Activated CD8-positive, alpha-beta T cell treated with anti-CD3 and anti-CD28 coated beads for 36 hours (primary cell): ENCODE measurements at regions of chr9 and their contacts with region 1.

Region 1: GRCh38 chr9:126398403-126399058 is 71.9 kb downstream of the MVB12B start:
- DNase-seq: peak; percentile 80
- ATAC-seq: no peak
- H3K4me3 Mint-ChIP-seq: no peak overlapping the region
- H3K27ac Mint-ChIP-seq: peak overlapping the region; percentile 63
- H3K4me1 Mint-ChIP-seq: peaks cover 57% of the 10 kb centered on the region
- H3K27me3 Mint-ChIP-seq: no peaks in the 10 kb centered on the region
- CTCF ChIP-seq: peak; percentile 97

Region 2: DNA sequence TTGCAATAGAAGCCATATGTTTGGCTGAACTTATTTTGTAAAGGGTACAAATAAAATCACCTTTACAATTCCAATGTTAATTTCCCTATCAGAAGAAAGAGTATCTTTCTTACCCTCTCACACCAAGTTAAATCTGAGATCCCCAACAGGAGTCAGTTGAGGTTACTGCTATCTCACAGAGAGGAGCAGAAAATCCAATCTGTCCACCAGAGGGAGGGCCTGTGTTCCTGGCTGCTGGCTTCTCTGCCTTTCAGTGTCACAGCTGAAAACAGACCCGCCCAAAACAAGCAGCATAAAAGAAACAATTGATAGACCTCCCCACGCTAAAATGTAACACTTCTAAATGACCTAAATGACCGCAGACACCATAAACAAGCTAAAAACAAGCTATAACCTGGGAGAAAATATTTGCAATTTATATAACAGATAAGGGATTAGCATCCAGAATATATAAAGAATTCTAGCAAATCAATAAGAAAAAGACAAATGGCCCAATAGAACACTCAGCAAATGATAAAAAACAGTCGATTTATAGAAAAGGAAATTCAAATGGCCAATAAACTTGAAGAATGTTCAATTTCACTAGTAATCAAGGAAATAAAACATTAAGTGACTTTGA is 96.4 kb before region 1 on chr9:
- CTCF ChIA-PET with region 1: interaction called, 61 read pairs
- POLR2A ChIA-PET with region 1: interaction called, 3 read pairs
- intact Hi-C with region 1: no loop called
- DNase-seq: peak; percentile 71
- ATAC-seq: peak; percentile 67
- H3K4me3 Mint-ChIP-seq: no peak overlapping the region
- H3K27ac Mint-ChIP-seq: no peak overlapping the region
- H3K4me1 Mint-ChIP-seq: peaks cover 1% of the 10 kb centered on the region
- H3K27me3 Mint-ChIP-seq: peaks cover 1% of the 10 kb centered on the region
- CTCF ChIP-seq: peak; percentile 52

Region 3: DNA sequence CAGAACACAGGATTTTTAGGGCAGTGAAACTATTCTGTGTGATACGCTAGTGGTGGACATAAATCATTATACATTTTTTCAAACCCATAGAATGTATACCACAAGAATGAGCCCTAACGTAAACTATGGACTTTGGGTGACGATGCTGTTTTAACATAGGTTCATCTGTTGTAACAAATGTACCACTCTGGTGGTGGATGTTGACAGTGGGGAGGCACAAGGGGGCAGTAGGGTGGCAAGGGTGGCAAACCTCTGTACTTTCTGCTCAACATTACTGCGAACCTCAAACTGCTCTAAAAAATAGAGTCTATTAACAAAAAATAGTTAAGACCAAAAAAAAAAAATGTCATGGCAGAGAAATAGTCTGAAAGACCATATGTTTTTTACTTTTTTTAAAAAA is 81.0 kb before region 1 on chr9:
- CTCF ChIA-PET with region 1: interaction called, 104 read pairs
- POLR2A ChIA-PET with region 1: no interaction called
- intact Hi-C with region 1: no loop called
- DNase-seq: peak; percentile 55
- ATAC-seq: peak; percentile 69
- H3K4me3 Mint-ChIP-seq: no peak overlapping the region
- H3K27ac Mint-ChIP-seq: no peak overlapping the region
- H3K4me1 Mint-ChIP-seq: peaks cover 4% of the 10 kb centered on the region
- H3K27me3 Mint-ChIP-seq: no peaks in the 10 kb centered on the region
- CTCF ChIP-seq: peak; percentile 40

Region 4: GRCh38 chr9:126411225-126411947 is 12.9 kb after region 1 on chr9:
- CTCF ChIA-PET with region 1: interaction called, 13 read pairs
- POLR2A ChIA-PET with region 1: interaction called, 4 read pairs
- intact Hi-C with region 1: no loop called
- DNase-seq: peak; percentile 70
- ATAC-seq: peak; percentile 90
- H3K4me3 Mint-ChIP-seq: peak overlapping the region; percentile 61
- H3K27ac Mint-ChIP-seq: peak overlapping the region; percentile 86
- H3K4me1 Mint-ChIP-seq: peaks cover 41% of the 10 kb centered on the region
- H3K27me3 Mint-ChIP-seq: no peaks in the 10 kb centered on the region
- CTCF ChIP-seq: no peak

Region 5: DNA sequence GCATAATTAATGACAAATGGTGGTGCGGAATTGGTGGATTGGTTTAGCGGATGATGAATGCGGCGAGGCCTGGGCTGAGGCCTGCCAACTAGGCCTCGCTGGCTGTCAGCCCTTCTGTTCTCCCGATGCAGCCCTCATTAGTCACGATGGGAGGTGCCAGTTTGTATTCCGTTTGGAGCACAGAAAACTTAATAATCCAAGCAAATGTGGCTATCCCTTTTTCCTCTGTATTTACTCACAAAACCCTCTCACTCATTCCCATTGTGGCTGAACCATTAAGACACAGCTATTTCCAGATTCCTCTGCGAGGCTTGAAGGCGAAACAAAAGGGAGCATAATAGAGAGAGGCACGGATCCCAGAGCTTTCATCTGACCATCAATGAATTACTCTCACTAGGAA is 42.4 kb after region 1 on chr9:
- CTCF ChIA-PET with region 1: interaction called, 10 read pairs
- POLR2A ChIA-PET with region 1: no interaction called
- intact Hi-C with region 1: no loop called
- DNase-seq: no peak
- ATAC-seq: no peak
- H3K4me3 Mint-ChIP-seq: no peak overlapping the region
- H3K27ac Mint-ChIP-seq: no peak overlapping the region
- H3K4me1 Mint-ChIP-seq: peaks cover 25% of the 10 kb centered on the region
- H3K27me3 Mint-ChIP-seq: no peaks in the 10 kb centered on the region
- CTCF ChIP-seq: no peak

Region 6: DNA sequence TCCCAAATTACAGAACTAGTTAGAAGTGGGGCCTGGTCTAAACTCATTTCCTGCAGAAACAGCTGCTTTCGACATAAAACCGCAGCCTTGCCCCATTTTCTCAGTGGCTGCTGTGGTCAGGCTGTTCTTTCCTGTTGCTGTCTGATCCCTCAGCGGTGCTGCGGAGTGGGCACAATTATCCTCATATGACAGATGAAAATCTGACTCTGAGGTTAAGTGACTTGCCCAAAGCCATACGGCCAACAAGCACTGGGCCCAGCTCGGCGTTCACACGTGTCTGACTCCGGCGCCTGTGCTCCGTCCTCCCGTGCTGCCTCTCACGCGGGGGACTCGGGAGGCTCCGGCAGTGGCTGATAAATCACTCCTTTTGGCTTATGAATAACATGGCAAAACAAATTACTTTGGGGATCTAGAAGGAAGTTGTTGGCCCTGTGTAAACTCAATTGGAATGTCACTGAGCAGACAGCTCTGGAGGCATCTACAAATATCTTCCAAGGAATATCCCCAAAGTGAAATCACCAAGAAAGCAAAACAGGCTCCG is 72.6 kb after region 1 on chr9:
- CTCF ChIA-PET with region 1: interaction called, 34 read pairs
- POLR2A ChIA-PET with region 1: interaction called, 6 read pairs
- intact Hi-C with region 1: loop called (anchors 2 kb)
- DNase-seq: peak; percentile 94
- ATAC-seq: peak; percentile 80
- H3K4me3 Mint-ChIP-seq: peak overlapping the region; percentile 46
- H3K27ac Mint-ChIP-seq: peak overlapping the region; percentile 79
- H3K4me1 Mint-ChIP-seq: peaks cover 64% of the 10 kb centered on the region
- H3K27me3 Mint-ChIP-seq: peaks cover 3% of the 10 kb centered on the region
- CTCF ChIP-seq: no peak

Region 7: GRCh38 chr9:126885131-126885641 is 486.7 kb after region 1 on chr9:
- CTCF ChIA-PET with region 1: no interaction called
- POLR2A ChIA-PET with region 1: no interaction called
- intact Hi-C with region 1: no loop called
- DNase-seq: no peak
- ATAC-seq: no peak
- H3K4me3 Mint-ChIP-seq: no peak overlapping the region
- H3K27ac Mint-ChIP-seq: no peak overlapping the region
- H3K4me1 Mint-ChIP-seq: no peaks in the 10 kb centered on the region
- H3K27me3 Mint-ChIP-seq: no peaks in the 10 kb centered on the region
- CTCF ChIP-seq: no peak